GM10248 (cell line): ENCODE measurements at regions of chr2 and their contacts with region 1.

Region 1: DNA sequence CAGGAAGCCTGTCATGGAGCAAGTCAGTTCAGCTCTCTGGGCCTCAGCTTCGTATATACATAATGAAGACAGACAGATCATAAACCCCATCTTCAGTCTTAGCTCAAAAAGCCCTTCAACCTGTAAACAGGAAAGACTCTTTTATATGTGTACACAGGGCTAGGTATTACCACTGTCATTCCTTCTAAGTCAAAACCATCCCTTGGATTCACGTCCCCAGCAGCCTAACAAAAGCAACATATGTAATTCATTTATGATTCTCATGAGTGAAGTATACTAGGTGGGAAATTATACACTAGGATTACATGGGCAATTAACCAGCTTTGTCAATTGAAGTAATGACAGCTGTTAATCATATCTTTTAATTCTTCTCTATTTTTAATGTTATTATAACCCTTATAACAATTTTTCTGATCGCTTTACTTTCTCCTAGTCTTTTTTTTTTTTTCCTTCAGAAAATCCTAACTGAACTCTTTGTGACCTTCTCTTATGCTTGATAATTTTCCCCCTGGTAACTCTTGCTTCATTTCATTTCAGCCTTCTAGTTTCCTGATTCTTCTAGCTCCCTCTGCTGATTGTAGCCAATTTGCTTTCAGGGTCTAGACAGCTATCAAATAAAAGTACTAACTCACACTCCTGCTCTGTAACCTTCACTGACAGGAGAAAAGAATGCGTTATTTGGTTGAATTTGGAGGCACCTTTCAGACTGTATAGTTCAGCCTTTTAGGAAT is 99.7 kb downstream of the RBM43 start:
- DNase-seq: no peak
- CTCF ChIP-seq: no peak

Region 2: GRCh38 chr2:150681120-150681804 is 480.7 kb before region 1 on chr2:
- CTCF ChIA-PET with region 1: no interaction called
- POLR2A ChIA-PET with region 1: no interaction called
- DNase-seq: no peak
- CTCF ChIP-seq: no peak

Region 3: GRCh38 chr2:151150331-151151320 is 11.4 kb before region 1 on chr2:
- CTCF ChIA-PET with region 1: interaction called, 10 read pairs
- POLR2A ChIA-PET with region 1: no interaction called
- DNase-seq: no peak
- CTCF ChIP-seq: no peak